Lower leg skin (tissue), 4 donors: ENCODE measurements at regions of chr3 and their contacts with region 1.

Region 1: GRCh38 chr3:127672516-127673190 is at the start of gene ABTB1:
- DNase-seq: peak; percentile 80 to 97
- H3K4me3 ChIP-seq: peak within 1 kb of the TSS; percentile 76
- CTCF ChIP-seq: no peak
- POLR2A ChIP-seq: peak in 1 of 2 donors; percentile 32
- total RNA-seq, gene ABTB1: 27.8 to 68.7 (median 39.3) TPM

Region 2: DNA sequence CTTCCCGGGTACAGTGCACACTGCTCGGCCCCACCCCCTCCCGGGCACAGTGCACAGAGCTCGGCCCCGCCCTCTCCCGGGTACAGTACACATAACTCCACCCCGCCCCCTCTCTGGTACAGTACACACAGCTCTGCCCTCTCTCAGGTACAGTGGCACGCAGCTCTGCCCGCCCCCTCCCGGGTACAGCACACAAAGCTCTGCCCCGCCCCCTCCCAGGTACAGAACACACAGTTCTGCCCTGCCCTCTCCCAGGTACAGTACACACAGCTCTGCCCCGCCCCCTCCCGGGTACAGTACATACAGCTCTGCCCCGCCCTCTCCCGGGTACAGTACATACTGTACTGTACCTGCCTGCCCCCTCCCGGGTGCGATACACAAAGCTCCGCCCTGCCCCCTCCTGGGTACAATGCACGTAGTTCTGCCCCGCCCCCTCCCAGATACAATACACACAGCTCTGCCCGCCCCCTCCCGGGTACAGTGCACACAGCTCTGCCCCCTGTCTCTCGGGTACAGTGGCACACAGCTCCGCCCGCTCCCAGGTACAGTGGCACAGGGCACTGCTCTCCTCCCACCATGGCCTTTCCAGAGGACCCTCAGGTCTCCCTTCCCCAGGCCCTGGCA is 368.4 kb before region 1 on chr3:
- intact Hi-C with region 1: no loop called
- DNase-seq: peak in 1 of 2 donors; percentile 30
- H3K4me3 ChIP-seq: no peak overlapping the region
- CTCF ChIP-seq: no peak
- POLR2A ChIP-seq: no peak

Region 3: DNA sequence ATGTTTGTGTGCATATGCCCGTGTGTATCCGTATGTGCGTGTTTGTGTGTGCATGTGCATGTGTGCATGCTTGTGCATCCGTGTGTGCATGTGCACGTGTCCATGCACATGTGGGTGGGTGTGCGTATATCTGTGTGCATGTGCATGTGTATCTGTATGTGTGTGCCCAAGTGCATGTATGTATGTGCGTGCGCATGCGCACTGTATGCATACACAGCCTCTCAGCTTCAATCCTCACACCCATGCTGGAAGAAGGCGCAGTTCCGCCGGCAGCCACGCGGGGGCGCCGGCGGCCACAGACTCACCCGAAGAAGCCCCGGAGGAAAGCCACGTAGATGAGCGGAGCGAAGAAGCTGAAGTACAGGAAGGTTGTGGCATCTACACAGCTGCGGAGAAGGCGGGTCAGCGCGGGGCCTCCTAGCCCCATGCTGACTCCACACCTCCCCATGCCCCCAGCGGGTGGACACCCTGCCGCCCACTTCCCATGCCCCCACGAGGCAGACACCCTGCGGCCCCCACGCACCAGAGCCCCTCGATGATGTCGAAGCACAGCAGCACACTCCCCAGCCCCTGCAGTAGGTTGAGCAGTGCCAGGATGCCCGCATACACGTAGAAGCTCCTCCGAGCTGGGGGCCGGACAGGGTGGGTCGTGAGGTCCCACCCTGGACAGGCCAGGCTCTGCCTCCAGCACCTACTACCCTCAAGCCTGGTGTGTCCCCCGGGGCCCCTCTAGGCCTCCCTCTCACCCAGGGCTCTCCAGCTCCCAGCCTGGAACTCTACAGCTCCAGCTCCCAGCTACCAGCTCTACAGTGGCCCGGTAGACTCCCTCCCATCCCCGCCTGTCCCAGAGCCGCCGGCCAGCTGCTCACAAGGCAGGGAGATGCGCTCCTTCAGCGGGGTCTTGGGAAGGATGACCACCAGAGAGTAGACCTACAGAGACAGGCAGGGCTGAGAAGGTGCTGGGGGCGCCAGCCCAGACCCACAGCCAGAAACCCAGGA is 97.5 kb before region 1 on chr3:
- intact Hi-C with region 1: loop called (anchors 10 kb)
- DNase-seq: peak; percentile 82 to 96
- H3K4me3 ChIP-seq: no peak overlapping the region
- CTCF ChIP-seq: peak in 1 of 3 donors; percentile 96
- POLR2A ChIP-seq: no peak

Region 4: DNA sequence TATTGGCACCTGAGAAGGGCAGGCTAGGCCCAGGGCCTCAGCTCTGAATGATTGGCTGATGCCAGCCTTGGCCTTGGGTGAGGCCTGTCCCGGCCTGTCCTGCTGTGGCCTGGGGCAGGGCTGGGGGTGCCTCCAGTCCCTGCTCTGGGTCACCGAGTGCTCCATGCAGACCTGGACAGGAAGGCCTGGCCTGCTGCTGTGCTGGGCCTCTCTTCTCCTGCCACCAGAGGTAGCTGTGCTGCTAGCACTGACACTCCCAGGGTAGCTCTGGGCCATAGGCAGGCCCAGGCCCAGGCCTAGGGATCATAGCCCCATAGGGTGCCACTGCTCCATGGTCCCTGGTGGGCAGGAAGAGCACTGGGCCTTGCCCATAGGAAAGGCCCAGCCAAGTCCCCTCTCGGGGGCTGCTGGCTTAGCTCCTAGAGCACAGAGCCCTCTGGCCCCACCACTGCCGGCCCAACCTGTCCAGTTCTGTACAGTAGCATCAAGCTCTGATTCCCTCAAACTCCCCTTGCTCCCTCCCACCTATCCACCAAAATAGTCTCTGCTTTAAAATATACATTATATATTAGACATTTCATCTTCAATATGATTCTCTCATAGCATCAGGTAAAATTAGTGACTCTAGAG is 18.3 kb after region 1 on chr3:
- intact Hi-C with region 1: no loop called
- DNase-seq: no peak
- H3K4me3 ChIP-seq: no peak overlapping the region
- CTCF ChIP-seq: no peak
- POLR2A ChIP-seq: no peak

Region 5: GRCh38 chr3:127822698-127823425 is 150.2 kb after region 1 on chr3:
- intact Hi-C with region 1: loop called (anchors 10 kb)
- DNase-seq: peak in 1 of 2 donors; percentile 92
- H3K4me3 ChIP-seq: peak overlapping the region; percentile 57
- CTCF ChIP-seq: no peak
- POLR2A ChIP-seq: no peak